ENCODE measurements at regions of chr12 and their contacts with region 1.

Region 1: DNA sequence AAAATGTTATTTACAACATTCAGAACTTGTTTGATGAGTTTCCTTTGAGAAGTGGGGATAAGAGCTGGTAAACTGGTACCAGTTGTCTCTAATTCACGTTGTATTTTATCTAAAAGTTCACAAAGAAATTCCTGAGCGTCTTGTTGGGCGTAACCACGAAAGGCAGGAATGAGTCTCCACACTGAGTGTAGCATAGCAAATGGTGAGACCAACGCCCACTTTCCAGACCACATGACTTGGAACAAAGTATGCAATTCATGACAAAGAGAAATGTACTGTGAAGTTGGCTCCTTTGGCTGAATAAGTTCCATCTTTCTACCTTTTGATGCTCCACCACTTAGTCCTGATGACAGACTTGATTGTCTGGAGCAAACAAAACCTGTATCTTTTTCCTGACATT is 18.4 kb downstream of the USP44 start:
- DNase-seq: no peak
- H3K4me3 ChIP-seq: no peak overlapping the region
- H3K27ac ChIP-seq: no peak overlapping the region
- H3K4me1 ChIP-seq: no peaks in the 10 kb centered on the region
- H3K27me3 ChIP-seq: no peaks in the 10 kb centered on the region
- CTCF ChIP-seq: no peak

Region 2: DNA sequence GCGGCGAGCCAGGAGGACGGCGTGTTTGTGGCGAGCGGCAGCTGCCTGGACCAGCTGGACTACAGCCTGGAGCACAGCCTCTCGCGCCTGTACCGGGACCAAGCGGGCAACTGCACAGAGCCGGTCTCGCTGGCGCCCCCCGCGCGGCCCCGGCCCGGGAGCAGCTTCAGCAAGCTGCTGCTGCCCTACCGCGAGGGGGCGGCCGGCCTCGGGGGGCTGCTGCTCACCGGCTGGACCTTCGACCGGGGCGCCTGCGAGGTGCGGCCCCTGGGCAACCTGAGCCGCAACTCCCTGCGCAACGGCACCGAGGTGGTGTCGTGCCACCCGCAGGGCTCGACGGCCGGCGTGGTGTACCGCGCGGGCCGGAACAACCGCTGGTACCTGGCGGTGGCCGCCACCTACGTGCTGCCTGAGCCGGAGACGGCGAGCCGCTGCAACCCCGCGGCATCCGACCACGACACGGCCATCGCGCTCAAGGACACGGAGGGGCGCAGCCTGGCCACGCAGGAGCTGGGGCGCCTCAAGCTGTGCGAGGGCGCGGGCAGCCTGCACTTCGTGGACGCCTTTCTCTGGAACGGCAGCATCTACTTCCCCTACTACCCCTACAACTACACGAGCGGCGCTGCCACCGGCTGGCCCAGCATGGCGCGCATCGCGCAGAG is 1383.6 kb before region 1 on chr12:
- CTCF ChIA-PET with region 1: no interaction called
- POLR2A ChIA-PET with region 1: no interaction called
- intact Hi-C with region 1: loop called (anchors 10 kb)
- DNase-seq: no peak
- H3K4me3 ChIP-seq: no peak overlapping the region
- H3K27ac ChIP-seq: no peak overlapping the region
- H3K4me1 ChIP-seq: no peaks in the 10 kb centered on the region
- H3K27me3 ChIP-seq: peaks cover 44% of the 10 kb centered on the region
- CTCF ChIP-seq: no peak

Region 3: GRCh38 chr12:95516757-95517156 is 16.1 kb before region 1 on chr12:
- CTCF ChIA-PET with region 1: interaction called, 13 read pairs
- POLR2A ChIA-PET with region 1: no interaction called
- intact Hi-C with region 1: no loop called
- DNase-seq: no peak
- H3K4me3 ChIP-seq: no peak overlapping the region
- H3K27ac ChIP-seq: no peak overlapping the region; the same call in 1 of the 2 replicates
- H3K4me1 ChIP-seq: no peaks in the 10 kb centered on the region
- H3K27me3 ChIP-seq: no peaks in the 10 kb centered on the region
- CTCF ChIP-seq: no peak

Region 4: DNA sequence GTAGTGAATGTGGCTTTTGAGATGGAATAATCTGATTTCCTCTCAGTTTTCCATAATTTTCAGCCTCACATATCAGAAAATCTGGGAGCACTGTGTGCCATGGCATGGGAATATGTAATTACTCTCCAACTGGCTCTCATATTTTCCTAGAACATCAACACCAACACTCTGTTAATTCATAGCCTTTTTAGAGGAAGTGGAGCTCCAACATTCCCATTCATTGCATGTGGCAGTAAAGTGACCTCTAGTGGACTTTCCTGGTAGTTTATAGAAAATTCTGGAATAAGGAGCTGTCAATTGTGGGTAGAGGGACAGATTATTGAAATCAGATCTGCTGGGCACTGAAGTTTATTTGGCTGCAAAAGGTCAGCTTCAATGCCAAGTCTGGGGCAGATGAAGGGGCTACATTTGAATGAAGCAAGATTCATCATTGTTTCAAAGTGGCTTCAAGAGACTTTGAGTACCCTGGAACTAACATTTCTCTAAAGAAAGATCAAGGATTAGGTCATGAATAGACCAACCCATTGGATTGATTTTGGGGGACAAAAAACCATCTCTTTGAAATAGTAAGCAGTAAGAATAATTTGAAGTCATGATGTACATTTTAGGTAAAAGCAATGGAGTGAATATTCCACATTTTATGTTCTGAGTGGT is 42.1 kb after region 1 on chr12:
- CTCF ChIA-PET with region 1: interaction called, 10 read pairs
- POLR2A ChIA-PET with region 1: no interaction called
- intact Hi-C with region 1: no loop called
- DNase-seq: peak; percentile 4 to 43
- H3K4me3 ChIP-seq: no peak overlapping the region
- H3K27ac ChIP-seq: no peak overlapping the region
- H3K4me1 ChIP-seq: no peaks in the 10 kb centered on the region
- H3K27me3 ChIP-seq: no peaks in the 10 kb centered on the region
- CTCF ChIP-seq: peak; percentile 82

Region 5: GRCh38 chr12:96883571-96883970 is 1350.7 kb after region 1 on chr12:
- CTCF ChIA-PET with region 1: no interaction called
- POLR2A ChIA-PET with region 1: interaction called, 13 read pairs
- intact Hi-C with region 1: no loop called
- DNase-seq: no peak
- H3K4me3 ChIP-seq: no peak overlapping the region
- H3K27ac ChIP-seq: no peak overlapping the region
- H3K4me1 ChIP-seq: no peaks in the 10 kb centered on the region
- H3K27me3 ChIP-seq: no peaks in the 10 kb centered on the region
- CTCF ChIP-seq: no peak